Natural killer cell (primary cell): ENCODE measurements at regions of chr2 and their contacts with region 1.

Region 1: GRCh38 chr2:20446917-20447436 is at the start of gene RHOB:
- DNase-seq: peak; percentile 94 to 95
- ATAC-seq: peak; percentile 94 to 99 (median 94)
- H3K4me3 ChIP-seq: peak within 1 kb of the TSS; percentile 61
- H3K4me3 Mint-ChIP-seq: peak within 1 kb of the TSS; percentile 88
- H3K27ac ChIP-seq: peak within 1 kb of the TSS; percentile 71
- H3K27ac Mint-ChIP-seq: peak within 1 kb of the TSS; percentile 63 to 84
- H3K4me1 ChIP-seq: peaks cover 20% of the 10 kb centered on the region
- H3K4me1 Mint-ChIP-seq: peaks cover 8% of the 10 kb centered on the region in 2 donors
- H3K27me3 ChIP-seq: peaks cover 3% of the 10 kb centered on the region
- H3K27me3 Mint-ChIP-seq: peaks cover 0 to 10% of the 10 kb centered on the region in 2 donors
- CTCF ChIP-seq: no peak
- total RNA-seq, gene RHOB: 50.8 to 222 (median 64.7) TPM

Region 2: GRCh38 chr2:20350753-20351554 is 96.0 kb before region 1 on chr2 and contains the start of gene PUM2:
- intact Hi-C with region 1: loop called (anchors 1 kb)
- DNase-seq: peak; percentile 92 to 99
- ATAC-seq: peak; percentile 85 to 96 (median 87)
- H3K4me3 ChIP-seq: peak within 1 kb of the TSS; percentile 76
- H3K4me3 Mint-ChIP-seq: no peak within 1 kb of the TSS
- H3K27ac ChIP-seq: peak within 1 kb of the TSS; percentile 95
- H3K27ac Mint-ChIP-seq: no peak within 1 kb of the TSS
- H3K4me1 ChIP-seq: peaks cover 30% of the 10 kb centered on the region
- H3K4me1 Mint-ChIP-seq: peaks cover 32 to 37% of the 10 kb centered on the region in 2 donors
- H3K27me3 ChIP-seq: no peaks in the 10 kb centered on the region
- H3K27me3 Mint-ChIP-seq: no peaks in the 10 kb centered on the region
- CTCF ChIP-seq: no peak
- total RNA-seq, gene PUM2: 115 to 157 (median 130) TPM

Region 3: DNA sequence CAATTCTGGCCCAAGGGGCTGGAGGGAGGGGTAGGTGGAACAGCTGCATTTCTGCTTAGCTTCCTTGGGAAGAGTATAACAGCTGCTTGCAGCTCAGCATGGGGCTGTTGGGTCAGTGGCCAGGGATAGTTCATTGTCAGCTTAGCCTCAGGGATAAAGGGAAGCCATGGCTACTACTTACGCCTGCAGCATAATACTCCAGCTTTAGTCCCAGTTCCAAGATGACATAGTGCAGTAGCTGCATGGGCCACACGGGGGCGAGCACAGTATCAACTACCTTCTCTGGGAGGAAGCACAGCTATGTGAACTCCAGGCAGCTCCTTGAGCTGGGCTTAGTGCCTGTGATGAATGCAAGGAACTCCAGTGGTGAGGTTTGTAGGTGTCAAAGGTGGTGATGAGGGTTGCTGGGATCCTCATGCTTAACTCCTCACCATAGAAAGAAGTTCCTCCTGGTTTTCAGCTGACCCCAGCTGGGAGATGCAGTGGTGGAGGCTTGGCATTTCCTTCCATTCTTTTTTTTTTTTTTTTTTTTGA is 35.5 kb before region 1 on chr2:
- intact Hi-C with region 1: loop called (anchors 2 kb)
- DNase-seq: peak; percentile 69 to 77
- ATAC-seq: peak; percentile 96 to 100 (median 100)
- H3K4me3 ChIP-seq: no peak overlapping the region
- H3K4me3 Mint-ChIP-seq: no peak overlapping the region
- H3K27ac ChIP-seq: no peak overlapping the region
- H3K27ac Mint-ChIP-seq: no peak overlapping the region
- H3K4me1 ChIP-seq: peaks cover 7% of the 10 kb centered on the region
- H3K4me1 Mint-ChIP-seq: peaks cover 5 to 7% of the 10 kb centered on the region in 2 donors
- H3K27me3 ChIP-seq: no peaks in the 10 kb centered on the region
- H3K27me3 Mint-ChIP-seq: peaks cover 0 to 7% of the 10 kb centered on the region in 2 donors
- CTCF ChIP-seq: peak; percentile 79

Region 4: DNA sequence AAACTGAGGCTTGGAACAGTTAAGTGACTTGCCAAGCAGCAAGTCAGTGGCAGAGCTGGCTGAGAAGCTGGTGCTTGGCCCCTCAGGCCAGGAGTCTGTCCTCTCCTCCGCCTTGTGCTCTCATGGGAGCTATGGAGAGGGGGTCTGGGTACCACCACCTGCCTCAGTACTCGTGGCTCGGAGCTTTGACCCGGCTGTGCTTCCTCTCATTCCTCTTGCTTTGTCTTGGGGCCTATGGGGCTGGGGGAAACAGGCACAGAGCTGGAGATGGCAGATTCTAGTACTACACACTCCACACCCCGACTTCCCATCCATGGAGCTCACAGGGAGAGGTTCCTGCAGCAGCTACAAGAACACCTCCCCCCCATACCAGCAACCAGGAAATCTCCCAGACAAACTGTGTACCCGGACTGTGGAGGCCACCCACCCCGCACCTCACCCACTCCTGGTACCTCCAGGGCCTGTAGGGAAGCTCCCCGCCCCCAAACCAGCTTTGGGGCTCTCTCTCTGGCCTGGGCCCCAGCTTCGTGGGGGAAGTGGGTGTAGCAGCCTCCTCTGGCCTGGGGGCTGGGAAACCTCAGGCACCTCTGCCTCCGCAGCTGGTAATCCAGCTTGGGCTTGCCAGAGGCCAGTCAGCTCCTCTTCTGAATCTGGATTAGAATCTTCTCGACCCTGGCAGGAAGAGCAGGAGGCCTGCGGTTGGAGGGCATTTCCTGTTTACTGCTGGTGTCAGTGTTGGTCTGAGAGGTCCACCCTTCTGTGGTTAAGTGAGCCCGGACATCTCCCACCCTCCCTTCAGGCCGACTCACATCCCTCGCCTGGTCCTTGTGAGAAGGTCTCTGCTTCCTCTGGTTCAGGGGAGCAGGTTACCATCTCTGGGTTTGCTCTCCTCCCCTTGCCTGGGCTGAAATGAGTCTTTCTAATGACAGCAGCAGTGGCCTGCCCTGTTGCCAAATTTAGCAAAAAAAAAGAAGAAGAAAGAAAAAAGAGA is 22.4 kb before region 1 on chr2:
- intact Hi-C with region 1: loop called (anchors 1 kb)
- DNase-seq: peak; percentile 32 to 45
- ATAC-seq: peak; percentile 70 to 84 (median 73)
- H3K4me3 ChIP-seq: peak overlapping the region; percentile 11
- H3K4me3 Mint-ChIP-seq: peak overlapping the region; percentile 76
- H3K27ac ChIP-seq: peak overlapping the region; percentile 85
- H3K27ac Mint-ChIP-seq: peak overlapping the region; percentile 89 to 96
- H3K4me1 ChIP-seq: peaks cover 65% of the 10 kb centered on the region
- H3K4me1 Mint-ChIP-seq: peaks cover 35 to 52% of the 10 kb centered on the region in 2 donors
- H3K27me3 ChIP-seq: no peaks in the 10 kb centered on the region
- H3K27me3 Mint-ChIP-seq: no peaks in the 10 kb centered on the region
- CTCF ChIP-seq: no peak

Region 5: DNA sequence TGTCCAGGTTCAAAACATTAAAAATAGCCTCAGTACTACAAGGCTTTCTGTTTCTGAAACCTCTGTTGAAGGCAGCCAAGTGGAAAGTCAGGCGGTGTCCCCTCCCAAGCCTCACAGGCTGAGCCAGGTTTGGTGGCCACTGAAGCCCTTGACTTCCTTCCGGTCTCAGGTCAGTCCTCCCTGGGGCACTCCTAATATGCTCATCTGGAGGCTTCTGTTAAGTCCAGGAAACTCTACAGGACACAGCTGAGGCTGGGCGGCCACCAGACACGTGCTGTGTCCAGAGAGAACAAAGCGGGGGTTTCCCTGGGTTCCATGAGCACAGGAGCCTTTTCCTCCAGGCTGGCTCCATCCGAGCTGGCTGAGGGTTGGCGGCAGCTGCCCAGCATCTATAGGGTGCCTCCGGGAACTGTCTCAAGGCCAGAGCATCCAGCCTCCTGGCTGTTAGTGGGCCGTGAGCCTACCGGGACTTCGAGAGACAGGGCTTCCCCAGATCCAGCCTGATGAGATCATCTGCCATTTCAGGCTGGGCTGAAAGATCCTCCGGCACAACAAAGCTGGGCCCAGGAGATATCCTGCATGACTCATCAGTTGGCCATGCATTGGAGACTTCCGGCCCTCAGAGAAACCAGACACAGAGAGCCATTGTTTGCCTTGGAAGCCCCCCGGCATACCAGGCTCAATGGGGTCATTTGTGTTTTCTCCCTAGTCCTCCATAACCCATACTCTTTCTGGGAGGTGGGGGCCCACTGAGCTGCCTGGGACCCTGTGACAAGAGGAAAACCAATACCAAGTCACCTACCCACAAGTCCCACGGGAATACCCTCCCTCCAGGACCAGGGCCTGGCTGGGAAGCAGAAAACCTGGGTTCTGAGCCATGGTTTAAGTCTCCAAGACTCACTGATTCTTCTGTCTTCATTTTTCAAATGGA is 132.2 kb after region 1 on chr2:
- intact Hi-C with region 1: loop called (anchors 2 kb)
- DNase-seq: no peak
- ATAC-seq: no peak
- H3K4me3 ChIP-seq: no peak overlapping the region
- H3K4me3 Mint-ChIP-seq: no peak overlapping the region
- H3K27ac ChIP-seq: no peak overlapping the region
- H3K27ac Mint-ChIP-seq: no peak overlapping the region
- H3K4me1 ChIP-seq: peaks cover 20% of the 10 kb centered on the region
- H3K4me1 Mint-ChIP-seq: peaks cover 17 to 18% of the 10 kb centered on the region in 2 donors
- H3K27me3 ChIP-seq: no peaks in the 10 kb centered on the region
- H3K27me3 Mint-ChIP-seq: no peaks in the 10 kb centered on the region
- CTCF ChIP-seq: no peak

Region 6: GRCh38 chr2:20642055-20642971 is 195.3 kb after region 1 on chr2:
- intact Hi-C with region 1: loop called (anchors 1 kb)
- DNase-seq: peak; percentile 75 to 85
- ATAC-seq: peak; percentile 92 to 100 (median 99)
- H3K4me3 ChIP-seq: no peak overlapping the region
- H3K4me3 Mint-ChIP-seq: no peak overlapping the region
- H3K27ac ChIP-seq: no peak overlapping the region
- H3K27ac Mint-ChIP-seq: no peak overlapping the region
- H3K4me1 ChIP-seq: peaks cover 9% of the 10 kb centered on the region
- H3K4me1 Mint-ChIP-seq: peaks cover 0 to 15% of the 10 kb centered on the region in 2 donors
- H3K27me3 ChIP-seq: no peaks in the 10 kb centered on the region
- H3K27me3 Mint-ChIP-seq: no peaks in the 10 kb centered on the region
- CTCF ChIP-seq: peak; percentile 82

Region 7: GRCh38 chr2:20962939-20963557 is 516.1 kb after region 1 on chr2:
- intact Hi-C with region 1: loop called (anchors 5 kb)
- DNase-seq: peak; percentile 51 to 81
- ATAC-seq: peak in 2 of 3 donors; percentile 76 to 84
- H3K4me3 ChIP-seq: no peak overlapping the region
- H3K4me3 Mint-ChIP-seq: no peak overlapping the region
- H3K27ac ChIP-seq: no peak overlapping the region
- H3K27ac Mint-ChIP-seq: no peak overlapping the region
- H3K4me1 ChIP-seq: no peaks in the 10 kb centered on the region
- H3K4me1 Mint-ChIP-seq: no peaks in the 10 kb centered on the region
- H3K27me3 ChIP-seq: no peaks in the 10 kb centered on the region
- H3K27me3 Mint-ChIP-seq: peaks cover 10 to 24% of the 10 kb centered on the region in 2 donors
- CTCF ChIP-seq: peak; percentile 81